ENCODE measurements at regions of chr12 and their contacts with region 1.

Region 1: DNA sequence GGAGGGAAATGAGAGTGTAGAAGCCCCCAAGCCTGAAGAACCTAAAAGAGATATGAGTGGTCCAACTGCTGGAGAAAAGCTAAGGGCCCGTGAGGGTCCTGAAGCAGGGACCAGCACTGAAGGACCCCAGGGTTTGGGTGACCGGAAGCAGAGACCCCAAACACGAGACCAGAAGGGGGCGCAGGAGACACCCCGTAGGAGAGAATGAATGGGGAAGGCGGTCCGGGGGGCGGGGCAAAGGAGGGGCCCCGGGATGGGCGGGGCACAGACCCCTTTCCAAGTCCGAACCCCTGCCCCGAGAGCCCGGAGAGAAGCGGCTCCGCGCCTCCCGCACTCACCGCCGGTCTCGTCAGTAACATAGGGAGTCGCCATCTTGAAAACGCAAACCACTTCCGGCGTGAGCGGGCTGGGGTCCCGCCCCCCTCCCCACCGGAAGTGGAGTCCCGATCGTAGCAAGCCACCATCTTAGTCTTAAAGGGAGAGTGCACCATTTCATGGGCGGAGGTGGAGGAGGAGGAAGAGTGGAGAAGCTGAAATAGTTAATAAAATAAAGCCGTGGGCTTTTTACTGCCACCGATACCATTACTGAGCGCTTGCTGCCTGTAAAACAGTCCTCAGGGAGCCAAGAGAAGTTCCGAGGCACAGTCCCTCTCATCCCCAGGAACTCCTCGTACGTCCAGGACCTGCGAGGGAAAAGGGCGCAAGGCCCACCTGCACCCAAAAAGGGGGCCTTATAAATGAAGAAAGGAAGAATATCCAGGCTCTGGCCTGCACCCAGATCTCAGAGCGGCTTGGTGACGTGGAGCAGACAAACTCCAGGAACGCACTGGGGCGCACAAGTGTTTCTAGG is 731 bp downstream of the PYM1 start:
- DNase-seq: peak; percentile 95
- H3K4me3 ChIP-seq: peak overlapping the region; percentile 55 to 98 (median 81)
- H3K27ac ChIP-seq: peak overlapping the region; percentile 40
- H3K4me1 ChIP-seq: peaks cover 28% of the 10 kb centered on the region
- H3K27me3 ChIP-seq: no peaks in the 10 kb centered on the region
- CTCF ChIP-seq: peak; percentile 69 to 74
- POLR2A ChIP-seq: peak; percentile 58

Region 2: GRCh38 chr12:55829967-55830600 is 96.9 kb before region 1 on chr12:
- CTCF ChIA-PET with region 1: interaction called, 19 read pairs
- POLR2A ChIA-PET with region 1: interaction called, 15 read pairs
- dilution Hi-C with region 1: no loop called
- intact Hi-C with region 1: loop called (anchors 1 kb)
- DNase-seq: peak; percentile 70
- H3K4me3 ChIP-seq: peak overlapping the region; percentile 81 to 92 (median 82)
- H3K27ac ChIP-seq: peak overlapping the region; percentile 60
- H3K4me1 ChIP-seq: peaks cover 27% of the 10 kb centered on the region
- H3K27me3 ChIP-seq: no peaks in the 10 kb centered on the region
- CTCF ChIP-seq: no peak
- POLR2A ChIP-seq: no peak

Region 3: DNA sequence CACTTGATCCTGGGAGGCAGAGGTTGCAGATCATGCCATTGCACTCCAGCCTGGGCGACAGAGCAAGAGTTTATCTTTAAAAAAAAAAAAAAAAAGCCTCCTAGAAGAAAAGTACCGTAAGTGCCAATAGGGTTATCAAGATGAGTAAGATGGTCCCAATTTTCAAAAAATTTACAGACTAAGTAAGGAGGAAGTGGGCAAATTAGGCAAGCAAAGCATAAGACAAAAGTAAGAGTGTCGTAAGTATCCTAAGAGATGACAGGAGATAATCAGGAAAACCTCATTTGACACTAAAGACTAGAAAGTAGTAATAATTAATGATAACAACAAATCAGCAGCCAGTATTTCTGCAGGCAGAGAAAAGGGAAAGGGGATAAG is 11.5 kb before region 1 on chr12:
- CTCF ChIA-PET with region 1: interaction called, 12 read pairs
- POLR2A ChIA-PET with region 1: no interaction called
- dilution Hi-C with region 1: no loop called
- intact Hi-C with region 1: no loop called
- DNase-seq: no peak
- H3K4me3 ChIP-seq: no peak overlapping the region
- H3K27ac ChIP-seq: no peak overlapping the region
- H3K4me1 ChIP-seq: peaks cover 12% of the 10 kb centered on the region
- H3K27me3 ChIP-seq: no peaks in the 10 kb centered on the region
- CTCF ChIP-seq: no peak
- POLR2A ChIP-seq: no peak

Region 4: GRCh38 chr12:55973598-55974307 is 46.8 kb after region 1 on chr12 and contains the start of gene RAB5B:
- CTCF ChIA-PET with region 1: interaction called, 4 read pairs
- POLR2A ChIA-PET with region 1: interaction called, 3 read pairs
- dilution Hi-C with region 1: no loop called
- intact Hi-C with region 1: loop called (anchors 1 kb)
- DNase-seq: peak; percentile 100
- H3K4me3 ChIP-seq: peak within 1 kb of the TSS; percentile 87 to 93 (median 92)
- H3K27ac ChIP-seq: peak within 1 kb of the TSS; percentile 81
- H3K4me1 ChIP-seq: peaks cover 27% of the 10 kb centered on the region
- H3K27me3 ChIP-seq: no peaks in the 10 kb centered on the region
- CTCF ChIP-seq: no peak
- POLR2A ChIP-seq: peak; percentile 74
- total RNA-seq, gene RAB5B: 97.4 and 103 TPM in 2 replicates

Region 5: GRCh38 chr12:56104109-56104814 is 177.3 kb after region 1 on chr12 and contains the start of gene PA2G4:
- CTCF ChIA-PET with region 1: no interaction called
- POLR2A ChIA-PET with region 1: no interaction called
- dilution Hi-C with region 1: no loop called
- intact Hi-C with region 1: loop called (anchors 1 kb)
- DNase-seq: peak; percentile 99
- H3K4me3 ChIP-seq: peak within 1 kb of the TSS; percentile 49 to 85 (median 68)
- H3K27ac ChIP-seq: peak within 1 kb of the TSS; percentile 60
- H3K4me1 ChIP-seq: peaks cover 25% of the 10 kb centered on the region
- H3K27me3 ChIP-seq: peaks cover 0 to 6% of the 10 kb centered on the region in 2 experiments
- CTCF ChIP-seq: no peak
- POLR2A ChIP-seq: peak; percentile 96
- total RNA-seq, gene PA2G4: 170 and 188 TPM in 2 replicates

Region 6: GRCh38 chr12:56286044-56286830 is 359.3 kb after region 1 on chr12:
- CTCF ChIA-PET with region 1: no interaction called
- POLR2A ChIA-PET with region 1: no interaction called
- dilution Hi-C with region 1: no loop called
- intact Hi-C with region 1: no loop called
- DNase-seq: peak; percentile 27
- H3K4me3 ChIP-seq: no peak overlapping the region
- H3K27ac ChIP-seq: no peak overlapping the region
- H3K4me1 ChIP-seq: peaks cover 8% of the 10 kb centered on the region
- H3K27me3 ChIP-seq: no peaks in the 10 kb centered on the region
- CTCF ChIP-seq: no peak
- POLR2A ChIP-seq: no peak